OCI-LY7 (cell line): ENCODE measurements at regions of chr2 and their contacts with region 1.

Region 1: DNA sequence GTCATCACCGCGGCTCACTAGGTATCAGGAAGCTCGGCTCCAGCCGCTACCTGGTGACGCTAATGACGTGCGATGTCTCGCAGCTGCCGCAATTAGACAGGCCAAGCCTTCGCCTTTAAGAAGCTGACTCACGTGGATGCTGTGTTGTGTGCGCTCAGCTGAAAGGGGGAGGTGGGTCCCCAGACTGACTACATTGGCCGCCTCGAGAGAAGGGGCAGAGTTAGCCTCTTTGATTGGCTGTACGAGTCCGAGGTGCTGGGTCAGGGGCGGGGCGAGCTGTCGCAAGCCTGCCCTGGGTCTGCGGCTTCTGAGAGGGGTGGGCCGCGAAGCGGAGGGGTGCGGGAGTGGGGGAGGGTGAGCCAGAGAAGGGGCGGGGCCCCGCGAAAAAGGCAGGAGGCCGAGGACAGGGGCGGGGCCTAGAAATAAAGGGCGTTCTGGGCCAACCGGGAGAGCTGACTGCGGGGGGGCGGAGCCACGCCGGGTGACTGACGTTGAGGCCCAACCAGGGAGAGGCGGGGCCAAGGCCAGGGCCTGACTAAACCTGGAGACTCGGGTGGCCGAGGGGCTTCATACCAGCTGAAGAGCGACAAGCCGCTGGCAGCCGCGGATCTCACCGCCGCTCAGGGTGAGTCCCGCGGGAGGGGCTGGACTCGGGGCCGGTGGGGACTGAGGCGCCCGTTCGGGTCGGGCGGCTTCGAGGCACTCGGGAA is at the start of gene YPEL5:
- DNase-seq: peak; percentile 99
- H3K4me3 ChIP-seq: peak within 1 kb of the TSS; percentile 72
- H3K27ac ChIP-seq: peak within 1 kb of the TSS; percentile 92
- H3K4me1 ChIP-seq: peaks cover 46% of the 10 kb centered on the region
- CTCF ChIP-seq: no peak
- total RNA-seq, gene YPEL5: 37.9 and 38.9 TPM in 2 replicates

Region 2: DNA sequence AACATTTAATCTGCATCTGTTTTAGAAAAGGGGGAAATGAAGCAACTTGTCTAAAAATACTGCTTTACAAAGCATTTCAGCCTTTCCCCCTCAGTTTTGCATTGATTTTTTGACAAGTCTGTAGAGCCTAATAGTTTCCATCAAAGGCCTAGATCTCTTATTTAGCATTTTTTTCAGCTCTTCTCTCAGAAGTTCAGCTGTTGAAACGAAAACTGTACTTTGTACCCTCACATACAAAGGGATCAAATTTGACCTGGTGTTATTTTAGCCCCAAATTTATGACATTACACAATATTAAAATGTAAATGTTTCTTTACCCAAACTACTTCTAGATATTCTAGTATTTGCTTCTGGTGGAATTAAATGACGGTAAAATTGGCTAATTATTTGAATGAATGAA is 13.2 kb after region 1 on chr2:
- CTCF ChIA-PET with region 1: interaction called, 4 read pairs
- POLR2A ChIA-PET with region 1: interaction called, 28 read pairs
- intact Hi-C with region 1: no loop called
- DNase-seq: peak; percentile 45
- H3K4me3 ChIP-seq: peak overlapping the region; percentile 22
- H3K27ac ChIP-seq: peak overlapping the region; percentile 75
- H3K4me1 ChIP-seq: peaks cover 34% of the 10 kb centered on the region
- CTCF ChIP-seq: no peak

Region 3: DNA sequence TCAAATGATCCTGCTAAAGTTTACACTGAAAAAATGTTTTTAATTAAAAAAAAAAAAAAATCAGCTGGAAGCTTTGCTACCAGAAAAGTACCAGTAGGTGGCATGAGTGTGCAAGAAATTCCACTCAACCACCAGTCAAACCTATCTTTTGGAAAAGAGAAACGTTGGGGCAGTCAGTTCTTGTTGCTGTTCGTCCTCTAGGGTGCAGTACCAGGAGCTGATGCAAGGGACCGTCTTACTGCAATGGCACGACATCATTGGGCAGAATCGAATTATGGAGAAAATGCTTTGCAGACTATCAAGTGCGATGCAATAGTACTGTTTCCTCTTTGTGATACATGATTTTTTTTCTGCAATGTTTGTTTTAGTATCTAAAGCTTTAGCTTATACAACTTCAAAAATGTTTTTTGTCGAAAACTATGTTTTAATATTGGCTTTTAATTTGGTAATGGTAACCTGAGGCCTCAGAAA is 18.5 kb after region 1 on chr2:
- CTCF ChIA-PET with region 1: interaction called, 4 read pairs
- POLR2A ChIA-PET with region 1: interaction called, 28 read pairs
- intact Hi-C with region 1: no loop called
- DNase-seq: peak; percentile 92
- H3K4me3 ChIP-seq: no peak overlapping the region
- H3K27ac ChIP-seq: no peak overlapping the region
- H3K4me1 ChIP-seq: peaks cover 22% of the 10 kb centered on the region
- CTCF ChIP-seq: peak; percentile 99

Region 4: DNA sequence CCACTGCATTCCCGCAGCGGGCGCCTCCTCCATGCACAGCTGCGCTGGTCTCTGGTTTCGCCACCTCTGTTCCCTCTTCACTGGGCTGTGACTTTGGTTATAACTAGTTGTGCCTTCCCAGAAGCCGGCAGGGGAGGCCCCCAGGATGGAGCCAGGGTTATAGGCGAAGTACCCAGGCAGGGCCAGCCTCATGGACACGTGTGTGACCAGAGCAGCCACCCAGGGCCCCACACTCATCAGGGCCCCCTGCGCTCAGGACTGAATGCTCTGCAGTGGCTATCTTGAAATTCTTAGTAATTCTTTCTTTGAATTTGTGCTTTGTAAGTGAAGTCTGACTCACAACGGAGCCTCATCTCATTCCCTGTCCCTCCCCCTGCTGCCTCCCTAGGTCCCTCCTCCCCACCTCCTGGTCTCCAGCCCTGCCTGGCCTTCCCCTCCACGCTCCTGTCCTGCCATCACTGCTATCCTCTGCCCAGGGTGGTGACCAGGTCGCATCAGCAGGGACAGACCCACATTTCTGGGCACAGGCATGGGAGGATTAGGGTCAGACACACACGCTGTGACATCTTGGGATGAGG is 46.6 kb after region 1 on chr2:
- CTCF ChIA-PET with region 1: no interaction called
- POLR2A ChIA-PET with region 1: no interaction called
- intact Hi-C with region 1: no loop called
- DNase-seq: no peak
- H3K4me3 ChIP-seq: no peak overlapping the region
- H3K27ac ChIP-seq: no peak overlapping the region
- H3K4me1 ChIP-seq: no peaks in the 10 kb centered on the region
- CTCF ChIP-seq: no peak

Region 5: DNA sequence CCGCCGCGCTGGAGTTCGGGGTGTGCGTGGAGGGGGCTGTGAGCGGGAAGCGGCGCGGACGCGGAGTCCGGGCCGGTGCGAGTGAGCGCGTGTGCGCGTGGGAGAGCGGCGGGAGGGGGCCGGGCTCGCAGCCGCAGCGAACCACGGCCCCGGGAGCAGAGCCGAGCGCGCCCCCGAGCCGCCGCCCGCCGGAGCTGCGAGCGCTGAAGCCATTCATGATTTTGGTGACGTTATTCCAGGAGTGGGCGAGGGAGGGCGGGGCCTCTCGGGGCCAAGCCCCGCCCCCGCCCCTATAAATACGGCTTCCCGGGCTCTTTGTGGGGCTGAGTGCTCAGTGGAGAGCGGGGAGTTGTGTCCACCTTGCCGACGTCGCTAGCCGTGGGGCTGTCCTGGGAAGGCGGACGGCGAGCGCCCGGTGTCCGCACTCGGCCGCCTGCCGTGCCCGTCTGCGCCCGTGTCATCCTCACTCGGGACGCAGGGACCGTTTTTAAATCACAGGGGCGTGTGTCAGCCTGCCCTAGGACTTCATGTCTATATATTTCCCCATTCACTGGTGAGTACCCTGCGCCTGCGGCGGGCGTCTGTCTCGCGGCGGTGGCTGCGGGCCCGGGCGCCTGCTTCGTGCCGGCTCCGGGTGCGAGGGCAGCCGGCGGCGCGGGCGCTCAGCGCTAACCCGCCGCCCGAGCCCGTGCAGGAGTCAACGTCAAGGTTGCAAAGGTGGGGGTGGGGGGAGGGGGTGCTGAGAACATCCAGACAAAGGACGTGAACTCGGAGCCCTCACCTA is 84.8 kb after region 1 on chr2 and contains the start of gene LBH:
- CTCF ChIA-PET with region 1: no interaction called
- POLR2A ChIA-PET with region 1: no interaction called
- intact Hi-C with region 1: no loop called
- DNase-seq: peak; percentile 57
- H3K4me3 ChIP-seq: peak within 1 kb of the TSS; percentile 67
- H3K27ac ChIP-seq: no peak within 1 kb of the TSS
- H3K4me1 ChIP-seq: peaks cover 21% of the 10 kb centered on the region
- CTCF ChIP-seq: no peak
- total RNA-seq, gene LBH: 0.75 and 3.7 TPM in 2 replicates